GM12878 (cell line): ENCODE measurements at regions of chr17 and their contacts with region 1.

Region 1: GRCh38 chr17:39144416-39144840 is 7.0 kb downstream of the PLXDC1 start:
- DNase-seq: no peak
- ATAC-seq: no peak
- H3K4me3 ChIP-seq: no peak overlapping the region
- H3K27ac ChIP-seq: no peak overlapping the region
- H3K4me1 ChIP-seq: no peaks in the 10 kb centered on the region
- H3K27me3 ChIP-seq: peaks cover 0 to 4% of the 10 kb centered on the region in 2 experiments; a peak in 2 of 4 replicates
- CTCF ChIP-seq: no peak
- EP300 ChIP-seq: no peak
- POLR2A ChIP-seq: no peak
- RAD21 ChIP-seq: no peak

Region 2: DNA sequence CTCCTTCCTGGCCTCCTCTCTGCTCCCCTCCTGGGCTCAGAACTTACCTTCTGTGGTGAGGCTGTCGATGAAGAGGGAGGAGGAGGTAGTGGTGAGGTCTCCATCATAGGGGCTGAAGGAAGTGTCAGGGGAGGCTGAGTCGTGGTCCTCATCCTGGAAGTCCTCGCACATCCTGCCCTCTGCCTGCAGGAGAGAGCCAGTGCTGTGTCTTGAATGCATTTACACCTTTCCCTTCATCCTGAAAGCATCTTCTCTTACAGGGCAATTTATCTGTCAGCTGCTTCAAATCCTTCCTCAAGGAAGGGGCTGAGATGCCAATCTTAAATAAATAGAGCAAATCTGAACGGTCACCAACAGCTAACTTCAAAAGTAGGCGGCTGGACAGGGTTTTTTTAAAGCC is 66.6 kb before region 1 on chr17:
- CTCF ChIA-PET with region 1: no interaction called
- POLR2A ChIA-PET with region 1: no interaction called
- RAD21 ChIA-PET with region 1: no interaction called
- SMC1A ChIA-PET with region 1: no interaction called
- in situ Hi-C with region 1: loop called (anchors 5 kb)
- intact Hi-C with region 1: no loop called
- DNase-seq: no peak
- ATAC-seq: peak; percentile 19; the same call in 2 of the 3 replicates
- H3K4me3 ChIP-seq: no peak overlapping the region
- H3K27ac ChIP-seq: no peak overlapping the region
- H3K4me1 ChIP-seq: no peaks in the 10 kb centered on the region
- H3K27me3 ChIP-seq: no peaks in the 10 kb centered on the region; a peak in 2 of 4 replicates
- CTCF ChIP-seq: no peak; a peak in 1 of 6 replicates
- EP300 ChIP-seq: no peak
- POLR2A ChIP-seq: no peak
- RAD21 ChIP-seq: no peak

Region 3: GRCh38 chr17:39099663-39100286 is 44.7 kb before region 1 on chr17:
- CTCF ChIA-PET with region 1: no interaction called
- POLR2A ChIA-PET with region 1: no interaction called
- RAD21 ChIA-PET with region 1: no interaction called
- SMC1A ChIA-PET with region 1: no interaction called
- in situ Hi-C with region 1: no loop called
- intact Hi-C with region 1: loop called (anchors 10 kb)
- DNase-seq: no peak
- ATAC-seq: no peak
- H3K4me3 ChIP-seq: no peak overlapping the region
- H3K27ac ChIP-seq: no peak overlapping the region
- H3K4me1 ChIP-seq: peaks cover 14% of the 10 kb centered on the region
- H3K27me3 ChIP-seq: peaks cover 0 to 4% of the 10 kb centered on the region in 2 experiments; a peak in 1 of 4 replicates
- CTCF ChIP-seq: no peak
- EP300 ChIP-seq: no peak
- POLR2A ChIP-seq: no peak
- RAD21 ChIP-seq: no peak

Region 4: GRCh38 chr17:39174907-39175694 is 30.7 kb after region 1 on chr17:
- CTCF ChIA-PET with region 1: interaction called, 10 read pairs
- POLR2A ChIA-PET with region 1: no interaction called
- RAD21 ChIA-PET with region 1: no interaction called
- SMC1A ChIA-PET with region 1: no interaction called
- in situ Hi-C with region 1: no loop called
- intact Hi-C with region 1: no loop called
- DNase-seq: no peak
- ATAC-seq: peak; percentile 93
- H3K4me3 ChIP-seq: no peak overlapping the region
- H3K27ac ChIP-seq: no peak overlapping the region
- H3K4me1 ChIP-seq: no peaks in the 10 kb centered on the region
- H3K27me3 ChIP-seq: no peaks in the 10 kb centered on the region
- CTCF ChIP-seq: peak; percentile 69 to 83 (median 81)
- EP300 ChIP-seq: no peak
- POLR2A ChIP-seq: no peak
- RAD21 ChIP-seq: peak; percentile 49